PC-3 (cell line): ENCODE measurements at regions of chr11 and their contacts with region 1.

Region 1: DNA sequence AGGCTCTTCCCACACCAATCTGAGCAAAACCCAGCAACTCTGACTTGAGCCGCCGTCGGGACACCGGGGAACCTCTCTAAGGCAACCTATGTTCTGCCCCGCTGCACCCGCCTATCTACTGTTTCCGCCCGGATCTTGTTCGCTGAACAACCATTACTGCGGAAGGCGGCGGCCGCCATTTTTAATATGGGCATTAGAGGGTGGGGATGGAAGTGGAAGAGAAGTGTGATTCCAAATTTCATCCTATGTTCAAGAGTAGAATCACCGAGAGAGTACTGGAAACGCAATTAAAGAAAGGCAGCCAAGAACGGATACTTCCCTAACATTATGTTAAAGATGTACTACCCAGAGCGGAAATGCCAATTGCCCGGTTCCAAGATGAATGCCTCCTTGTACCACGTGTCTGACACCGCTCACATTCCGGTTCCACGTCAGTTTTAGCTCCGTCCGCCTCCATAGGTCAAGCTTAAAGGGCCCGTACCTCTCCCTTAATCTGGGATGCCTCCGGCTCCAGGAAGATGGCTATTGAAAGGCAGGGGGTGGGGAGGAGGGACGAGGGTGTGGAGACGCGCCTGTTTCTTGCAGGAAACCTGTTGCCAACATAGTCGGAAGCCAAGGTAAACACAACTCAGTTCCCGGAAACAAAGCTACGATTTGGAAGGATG is at the start of gene DPAGT1:
- DNase-seq: peak; percentile 99
- ATAC-seq: peak; percentile 81
- H3K4me3 ChIP-seq: peak within 1 kb of the TSS; percentile 89
- H3K27ac ChIP-seq: peak within 1 kb of the TSS; percentile 84
- H3K4me1 ChIP-seq: peaks cover 24% of the 10 kb centered on the region
- H3K27me3 ChIP-seq: no peaks in the 10 kb centered on the region
- CTCF ChIP-seq: no peak
- total RNA-seq, gene DPAGT1: 68.0 and 82.4 TPM in 2 replicates

Region 2: DNA sequence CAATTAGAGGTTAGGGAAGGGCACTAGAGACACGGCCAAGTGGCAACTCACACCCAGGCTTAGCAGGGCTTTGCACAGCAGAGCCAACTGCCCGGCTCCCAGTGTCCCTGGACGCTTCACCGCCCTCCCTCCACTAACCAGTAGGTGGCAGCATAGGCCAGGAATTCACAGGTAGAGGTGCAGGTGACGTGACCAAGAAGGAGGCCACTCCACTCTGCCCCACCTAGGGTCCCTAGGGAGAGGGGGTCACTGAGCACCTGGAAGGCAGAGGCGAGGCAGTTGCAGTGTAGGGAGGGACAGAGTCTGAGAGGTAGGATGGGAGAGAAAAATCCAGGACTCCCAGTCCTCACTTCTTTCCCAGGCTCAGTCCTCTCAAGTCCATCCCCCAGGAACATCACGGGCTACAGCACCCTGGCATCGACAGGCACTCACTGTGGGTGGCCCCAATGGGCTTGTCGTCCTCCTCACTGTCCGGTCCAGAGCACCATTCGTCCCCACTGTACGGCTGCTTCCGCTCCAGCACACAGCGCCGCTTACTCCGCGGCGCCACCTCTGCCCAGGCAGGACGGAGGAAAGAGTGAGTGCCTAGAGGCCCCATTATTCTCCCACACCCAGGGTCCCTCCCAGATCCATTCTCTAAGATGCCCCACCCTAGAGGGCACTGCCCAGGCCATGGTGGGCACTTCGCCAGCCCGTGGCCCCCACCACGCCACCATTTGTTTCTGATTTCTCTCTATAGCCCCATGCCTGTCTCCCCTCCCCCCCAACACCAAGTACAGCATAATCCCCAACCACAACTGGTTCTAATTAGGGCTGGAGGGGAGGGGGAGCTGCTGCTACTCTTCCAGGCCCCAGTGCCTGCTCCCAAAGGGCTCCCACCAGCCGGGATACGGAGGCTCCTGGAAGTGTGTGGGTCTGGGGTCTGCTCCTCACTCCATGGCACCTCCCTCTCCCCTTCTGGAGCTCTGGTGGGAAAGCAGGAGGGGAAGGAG is 194.5 kb before region 1 on chr11:
- CTCF ChIA-PET with region 1: no interaction called
- POLR2A ChIA-PET with region 1: no interaction called
- intact Hi-C with region 1: no loop called
- DNase-seq: peak; percentile 96
- ATAC-seq: peak; percentile 27
- H3K4me3 ChIP-seq: no peak overlapping the region
- H3K27ac ChIP-seq: no peak overlapping the region
- H3K4me1 ChIP-seq: peaks cover 43% of the 10 kb centered on the region
- H3K27me3 ChIP-seq: no peaks in the 10 kb centered on the region
- CTCF ChIP-seq: peak; percentile 98

Region 3: GRCh38 chr11:119018074-119018938 is 83.6 kb before region 1 on chr11 and contains the starts of genes RPS25 and TRAPPC4:
- CTCF ChIA-PET with region 1: interaction called, 3 read pairs
- POLR2A ChIA-PET with region 1: interaction called, 10 read pairs
- intact Hi-C with region 1: loop called (anchors 1 kb)
- DNase-seq: peak; percentile 99
- ATAC-seq: peak; percentile 82
- H3K4me3 ChIP-seq: peak within 1 kb of the TSS; percentile 98
- H3K27ac ChIP-seq: peak within 1 kb of the TSS; percentile 88
- H3K4me1 ChIP-seq: peaks cover 31% of the 10 kb centered on the region
- H3K27me3 ChIP-seq: no peaks in the 10 kb centered on the region
- CTCF ChIP-seq: no peak
- total RNA-seq, gene RPS25: 813 and 931 TPM in 2 replicates
- total RNA-seq, gene TRAPPC4: 129 and 150 TPM in 2 replicates

Region 4: DNA sequence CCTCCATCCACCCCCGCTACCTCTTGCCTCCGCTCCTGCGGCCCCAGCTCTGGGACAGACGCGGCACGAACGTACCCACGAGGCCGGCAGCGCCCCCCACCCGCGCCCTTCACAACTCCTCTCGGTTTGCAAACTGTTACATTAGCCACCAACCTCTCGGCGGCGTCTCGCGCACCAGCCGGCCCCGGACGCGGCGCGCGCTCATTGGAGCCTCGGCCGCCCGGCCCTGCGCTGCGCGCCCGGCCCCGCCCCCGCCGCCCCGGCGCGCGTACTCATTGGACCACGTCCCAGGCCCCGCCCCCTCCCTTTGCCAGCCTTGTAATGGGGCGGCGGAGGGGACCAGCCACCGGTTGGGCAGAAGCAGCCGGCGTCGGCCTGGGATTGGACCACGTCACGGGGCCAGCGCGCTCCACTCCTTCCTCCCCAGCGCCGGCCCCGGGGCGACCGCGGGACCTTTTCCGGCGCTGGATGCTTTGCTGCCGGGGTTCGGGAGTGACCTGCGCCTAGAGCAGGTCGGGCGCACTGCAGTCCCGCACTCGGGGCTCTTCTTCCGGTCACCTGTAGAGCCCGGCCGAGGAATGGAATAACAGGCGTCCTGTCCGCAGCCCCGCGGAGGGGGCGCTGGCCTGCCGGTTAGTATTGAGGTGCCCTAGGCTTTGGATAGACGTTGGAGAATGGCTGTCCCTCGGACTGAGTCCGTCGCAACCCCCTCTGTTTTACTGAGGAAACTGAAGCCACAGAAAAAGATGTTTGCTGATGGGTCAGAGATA is 44.7 kb before region 1 on chr11 and contains the start of gene HYOU1:
- CTCF ChIA-PET with region 1: interaction called, 10 read pairs
- POLR2A ChIA-PET with region 1: no interaction called
- intact Hi-C with region 1: no loop called
- DNase-seq: peak; percentile 98
- ATAC-seq: peak; percentile 93
- H3K4me3 ChIP-seq: peak within 1 kb of the TSS; percentile 93
- H3K27ac ChIP-seq: peak within 1 kb of the TSS; percentile 62
- H3K4me1 ChIP-seq: peaks cover 15% of the 10 kb centered on the region
- H3K27me3 ChIP-seq: no peaks in the 10 kb centered on the region
- CTCF ChIP-seq: peak; percentile 24
- total RNA-seq, gene HYOU1: 168 and 208 TPM in 2 replicates

Region 5: GRCh38 chr11:119084663-119085436 is 17.0 kb before region 1 on chr11 and contains the start of gene HMBS:
- CTCF ChIA-PET with region 1: no interaction called
- POLR2A ChIA-PET with region 1: interaction called, 11 read pairs
- intact Hi-C with region 1: loop called (anchors 2 kb)
- DNase-seq: peak; percentile 98
- ATAC-seq: peak; percentile 91
- H3K4me3 ChIP-seq: peak within 1 kb of the TSS; percentile 80
- H3K27ac ChIP-seq: peak within 1 kb of the TSS; percentile 80
- H3K4me1 ChIP-seq: peaks cover 23% of the 10 kb centered on the region
- H3K27me3 ChIP-seq: no peaks in the 10 kb centered on the region
- CTCF ChIP-seq: no peak
- total RNA-seq, gene HMBS: 9.3 and 22.5 TPM in 2 replicates

Region 6: GRCh38 chr11:119196833-119197483 is 95.1 kb after region 1 on chr11:
- CTCF ChIA-PET with region 1: interaction called, 4 read pairs
- POLR2A ChIA-PET with region 1: no interaction called
- intact Hi-C with region 1: loop called (anchors 2 kb)
- DNase-seq: peak; percentile 94
- ATAC-seq: peak; percentile 87
- H3K4me3 ChIP-seq: no peak overlapping the region
- H3K27ac ChIP-seq: no peak overlapping the region
- H3K4me1 ChIP-seq: peaks cover 4% of the 10 kb centered on the region; the same call in 1 of the 2 replicates
- H3K27me3 ChIP-seq: no peaks in the 10 kb centered on the region
- CTCF ChIP-seq: peak; percentile 95